Gastrocnemius medialis (tissue), 4 donors: ENCODE measurements at regions of chr2 and their contacts with region 1.

Region 1: DNA sequence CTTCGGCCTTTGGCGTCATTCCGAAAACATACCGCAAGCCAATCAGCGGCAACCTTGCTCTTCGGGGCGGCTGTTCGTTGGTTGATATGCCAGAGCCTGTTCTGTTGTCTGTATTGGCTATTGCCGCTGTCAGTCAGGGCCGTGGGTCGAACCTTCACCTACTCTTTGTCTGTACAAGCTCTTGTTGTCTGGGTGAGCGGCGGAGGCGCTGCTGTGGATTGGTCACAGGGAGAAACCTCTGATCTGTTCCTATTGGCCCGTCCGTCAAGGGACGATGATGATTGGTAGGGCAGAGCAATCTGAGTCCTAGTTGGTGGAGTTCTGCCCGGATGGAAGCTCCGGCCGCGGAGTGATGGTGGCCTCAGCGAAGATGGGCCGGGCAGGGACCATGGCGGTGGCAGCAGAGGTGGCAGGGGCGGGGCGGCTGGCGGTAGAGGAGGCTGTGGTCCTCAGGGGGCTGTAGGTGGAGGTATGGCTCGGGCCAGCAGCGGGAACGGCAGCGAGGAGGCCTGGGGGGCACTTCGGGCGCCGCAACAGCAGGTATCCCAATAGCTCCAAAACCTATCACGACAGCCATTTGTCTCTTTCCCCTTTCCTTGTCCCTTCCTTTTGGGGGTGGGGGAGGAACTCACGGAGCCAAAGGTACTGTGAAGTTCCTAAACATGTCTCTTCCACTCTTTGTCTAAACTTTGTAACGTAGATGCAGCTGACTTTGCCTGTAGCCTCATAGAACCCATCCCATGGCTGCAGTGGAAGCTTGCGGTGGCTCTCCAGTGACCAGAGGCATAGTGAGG is at the start of gene WBP1:
- DNase-seq: peak; percentile 100
- ATAC-seq: peak; percentile 92 to 93
- H3K4me3 ChIP-seq: peak within 1 kb of the TSS; percentile 67 to 92 (median 71)
- H3K27ac ChIP-seq: peak within 1 kb of the TSS; percentile 84 to 94 (median 88)
- H3K4me1 ChIP-seq: peaks cover 24 to 32% of the 10 kb centered on the region in 2 donors
- H3K27me3 ChIP-seq: no peaks in the 10 kb centered on the region
- CTCF ChIP-seq: no peak
- POLR2A ChIP-seq: peak; percentile 22 to 23
- total RNA-seq, gene WBP1: 10.7 to 17.5 (median 16.5) TPM

Region 2: DNA sequence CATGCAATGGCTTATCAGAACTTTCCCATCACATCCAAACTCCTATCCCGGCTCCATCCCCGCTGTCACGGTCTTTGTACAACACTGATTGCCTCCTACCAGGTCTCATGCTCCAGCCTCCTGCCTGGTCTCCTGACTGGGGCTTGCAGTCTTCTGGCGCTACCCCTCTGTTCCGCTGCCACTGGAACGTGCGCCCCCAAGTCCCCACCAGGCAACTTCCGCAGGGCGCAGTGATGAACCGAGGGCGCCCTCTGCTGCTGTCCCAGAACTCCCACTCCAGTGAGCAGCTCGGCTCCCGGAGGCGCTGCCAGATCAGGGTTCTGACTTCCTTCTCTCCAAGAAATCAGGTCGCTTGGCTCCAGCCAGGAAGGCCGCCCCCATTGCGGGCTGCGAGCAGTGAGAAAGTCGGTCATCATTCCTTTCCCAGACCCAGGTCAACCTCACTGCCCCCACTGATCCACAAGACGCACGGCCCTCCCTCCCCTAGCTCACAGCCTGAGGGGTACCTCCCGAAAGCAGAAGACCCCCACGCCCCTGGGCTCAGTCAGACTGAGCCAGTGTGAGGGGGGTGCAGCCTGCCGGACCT is 1301.7 kb before region 1 on chr2:
- in situ Hi-C with region 1: no loop called
- intact Hi-C with region 1: no loop called
- DNase-seq: peak; percentile 17 to 34
- ATAC-seq: peak; percentile 62 to 72
- H3K4me3 ChIP-seq: no peak overlapping the region
- H3K27ac ChIP-seq: no peak overlapping the region
- H3K4me1 ChIP-seq: peaks cover 0 to 3% of the 10 kb centered on the region in 2 donors
- H3K27me3 ChIP-seq: peaks cover 0 to 9% (median 5%) of the 10 kb centered on the region in 3 donors
- CTCF ChIP-seq: peak; percentile 43 to 82 (median 73)
- POLR2A ChIP-seq: no peak

Region 3: DNA sequence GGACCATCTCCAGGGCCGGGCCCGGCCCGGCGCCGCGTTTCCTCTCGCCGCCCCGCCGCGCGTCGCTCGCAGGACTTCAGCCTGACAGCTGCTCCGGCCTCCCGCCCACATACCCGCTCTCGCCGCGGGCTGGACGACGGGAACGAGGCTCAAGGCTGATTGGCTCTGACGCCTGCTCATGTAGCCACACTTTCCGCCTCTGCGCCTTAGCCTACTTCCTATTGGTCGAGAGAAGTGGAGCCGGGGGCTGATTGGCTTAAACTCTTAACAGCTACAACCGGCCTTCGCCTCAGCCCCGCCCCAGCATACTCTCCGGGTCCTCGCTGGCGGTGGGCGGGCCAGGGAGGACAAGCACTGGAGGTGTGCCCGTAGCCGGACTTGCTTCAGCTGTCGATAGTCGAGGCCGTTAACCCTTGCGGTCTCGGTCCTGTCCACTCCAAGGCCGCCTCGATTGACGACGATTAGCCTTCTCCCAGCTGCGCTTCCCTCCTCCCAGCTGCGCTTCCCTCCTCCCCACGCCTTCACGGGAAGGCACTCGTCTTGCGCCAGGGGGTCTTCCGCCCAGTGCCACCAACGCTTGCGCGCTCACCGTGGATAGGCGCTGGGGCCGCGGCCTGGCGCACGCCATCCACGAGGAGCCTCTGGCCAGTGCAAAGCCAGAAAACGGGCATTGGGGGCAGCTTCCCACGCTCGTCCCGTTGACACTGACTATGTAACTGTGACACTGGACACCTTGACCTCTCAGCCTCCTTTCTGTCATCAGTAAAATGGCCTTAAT is 1225.0 kb before region 1 on chr2 and contains the start of gene PRADC1:
- in situ Hi-C with region 1: no loop called
- intact Hi-C with region 1: loop called (anchors 10 kb)
- DNase-seq: peak; percentile 100
- ATAC-seq: peak; percentile 90 to 93
- H3K4me3 ChIP-seq: peak within 1 kb of the TSS; percentile 67 to 100 (median 95)
- H3K27ac ChIP-seq: peak within 1 kb of the TSS; percentile 90 to 100 (median 95)
- H3K4me1 ChIP-seq: peaks cover 17 to 35% of the 10 kb centered on the region in 2 donors
- H3K27me3 ChIP-seq: no peaks in the 10 kb centered on the region
- CTCF ChIP-seq: no peak
- POLR2A ChIP-seq: peak; percentile 85 to 87
- total RNA-seq, gene PRADC1: 69.4 to 132 (median 104) TPM

Region 4: DNA sequence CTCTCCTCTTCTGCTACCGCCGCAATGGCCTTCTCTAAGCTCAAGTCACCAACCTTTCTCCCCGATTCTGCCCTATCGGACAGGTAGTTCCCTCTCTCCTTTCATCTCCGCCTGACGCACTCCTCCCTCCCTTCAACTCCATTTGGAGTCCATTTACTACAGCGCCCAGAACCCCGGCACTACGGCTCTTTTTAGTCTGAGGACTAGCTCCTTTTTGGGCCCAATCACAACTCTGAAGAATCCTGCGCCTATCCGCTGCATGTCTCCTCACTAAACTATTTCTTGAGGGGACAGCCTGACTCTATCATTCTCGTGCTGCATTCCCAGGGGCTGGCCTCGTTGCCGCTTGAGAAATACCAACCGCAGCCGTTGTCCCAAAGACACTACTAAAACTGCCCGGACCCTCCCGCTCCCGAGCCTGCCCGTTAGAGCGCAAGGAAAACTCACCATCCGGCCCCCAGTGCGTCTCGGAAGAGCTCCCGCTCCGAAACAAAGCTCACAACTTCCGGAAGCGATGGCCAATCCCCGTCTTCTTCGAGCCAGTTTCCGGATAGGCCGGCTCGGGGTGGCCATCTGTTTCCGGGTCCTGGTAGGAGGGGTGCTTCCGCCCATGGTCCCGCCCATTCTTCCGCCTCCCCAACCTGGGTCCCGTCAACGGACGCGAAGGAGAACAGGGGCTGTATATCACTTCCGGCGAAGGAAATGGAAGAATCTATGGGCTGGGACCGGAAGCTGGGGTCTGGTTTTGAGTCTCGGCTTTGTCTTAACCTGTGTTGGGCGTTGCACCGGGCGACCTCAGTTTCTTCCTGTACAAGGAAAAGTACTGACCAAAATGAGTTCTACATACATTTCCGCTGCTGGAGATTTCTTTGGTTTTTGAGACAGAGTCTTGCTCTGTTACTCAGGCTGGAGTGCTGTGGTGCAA is 721.2 kb before region 1 on chr2 and contains the start of gene TPRKB:
- in situ Hi-C with region 1: no loop called
- intact Hi-C with region 1: loop called (anchors 2 kb)
- DNase-seq: peak; percentile 96 to 97
- ATAC-seq: peak; percentile 99
- H3K4me3 ChIP-seq: peak within 1 kb of the TSS; percentile 74 to 89 (median 82)
- H3K27ac ChIP-seq: peak within 1 kb of the TSS; percentile 69 to 86 (median 78)
- H3K4me1 ChIP-seq: peaks cover 19 to 20% of the 10 kb centered on the region in 2 donors
- H3K27me3 ChIP-seq: no peaks in the 10 kb centered on the region
- CTCF ChIP-seq: no peak
- POLR2A ChIP-seq: peak; percentile 58 to 65
- total RNA-seq, gene TPRKB: 49.4 to 90.1 (median 55.9) TPM

Region 5: DNA sequence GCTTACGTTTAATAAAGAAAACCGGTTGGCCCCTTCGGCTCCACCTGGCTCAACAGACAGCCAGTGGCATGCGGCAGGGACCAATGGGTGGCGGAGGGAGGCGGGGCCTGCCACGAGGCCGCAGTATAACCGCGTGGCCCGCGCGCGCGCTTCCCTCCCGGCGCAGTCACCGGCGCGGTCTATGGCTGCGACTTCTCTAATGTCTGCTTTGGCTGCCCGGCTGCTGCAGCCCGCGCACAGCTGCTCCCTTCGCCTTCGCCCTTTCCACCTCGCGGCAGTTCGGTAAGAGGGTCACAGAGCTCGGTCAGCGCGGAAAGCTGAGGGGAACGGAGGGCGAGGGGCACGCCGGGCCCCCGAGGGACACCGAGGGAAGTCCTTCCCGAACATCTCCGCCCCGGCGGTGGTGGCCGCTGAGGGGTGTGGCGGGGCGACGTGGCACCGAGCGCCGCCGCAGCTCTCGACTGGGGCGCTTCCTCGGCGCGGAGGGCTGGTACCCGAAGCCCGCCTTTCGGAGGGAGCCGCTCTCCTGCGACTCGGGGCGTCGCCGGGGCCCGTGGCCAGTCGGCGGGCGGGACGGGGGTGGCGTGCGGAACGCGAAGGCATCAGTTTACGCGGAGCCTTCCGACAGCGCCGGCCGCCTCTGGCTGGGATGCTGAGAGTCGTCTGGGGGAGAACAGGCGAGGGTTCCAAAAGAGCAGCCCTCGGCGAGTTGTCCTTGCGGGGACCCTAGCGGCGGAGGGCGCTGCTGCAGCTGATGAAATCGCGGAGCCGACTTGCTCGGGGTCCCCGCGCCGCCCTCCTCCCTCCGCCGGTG is 259.7 kb before region 1 on chr2 and contains the start of gene MTHFD2:
- in situ Hi-C with region 1: no loop called
- intact Hi-C with region 1: loop called (anchors 10 kb)
- DNase-seq: peak; percentile 83 to 87
- ATAC-seq: peak; percentile 69 to 72
- H3K4me3 ChIP-seq: peak within 1 kb of the TSS; percentile 61 to 80 (median 78)
- H3K27ac ChIP-seq: peak within 1 kb of the TSS; percentile 77 to 93 (median 88)
- H3K4me1 ChIP-seq: peaks cover 33 to 39% of the 10 kb centered on the region in 2 donors
- H3K27me3 ChIP-seq: no peaks in the 10 kb centered on the region
- CTCF ChIP-seq: peak; percentile 74 to 89 (median 76)
- POLR2A ChIP-seq: peak; percentile 68 to 82
- total RNA-seq, gene MTHFD2: 29.0 to 53.5 (median 32.5) TPM

Region 6: DNA sequence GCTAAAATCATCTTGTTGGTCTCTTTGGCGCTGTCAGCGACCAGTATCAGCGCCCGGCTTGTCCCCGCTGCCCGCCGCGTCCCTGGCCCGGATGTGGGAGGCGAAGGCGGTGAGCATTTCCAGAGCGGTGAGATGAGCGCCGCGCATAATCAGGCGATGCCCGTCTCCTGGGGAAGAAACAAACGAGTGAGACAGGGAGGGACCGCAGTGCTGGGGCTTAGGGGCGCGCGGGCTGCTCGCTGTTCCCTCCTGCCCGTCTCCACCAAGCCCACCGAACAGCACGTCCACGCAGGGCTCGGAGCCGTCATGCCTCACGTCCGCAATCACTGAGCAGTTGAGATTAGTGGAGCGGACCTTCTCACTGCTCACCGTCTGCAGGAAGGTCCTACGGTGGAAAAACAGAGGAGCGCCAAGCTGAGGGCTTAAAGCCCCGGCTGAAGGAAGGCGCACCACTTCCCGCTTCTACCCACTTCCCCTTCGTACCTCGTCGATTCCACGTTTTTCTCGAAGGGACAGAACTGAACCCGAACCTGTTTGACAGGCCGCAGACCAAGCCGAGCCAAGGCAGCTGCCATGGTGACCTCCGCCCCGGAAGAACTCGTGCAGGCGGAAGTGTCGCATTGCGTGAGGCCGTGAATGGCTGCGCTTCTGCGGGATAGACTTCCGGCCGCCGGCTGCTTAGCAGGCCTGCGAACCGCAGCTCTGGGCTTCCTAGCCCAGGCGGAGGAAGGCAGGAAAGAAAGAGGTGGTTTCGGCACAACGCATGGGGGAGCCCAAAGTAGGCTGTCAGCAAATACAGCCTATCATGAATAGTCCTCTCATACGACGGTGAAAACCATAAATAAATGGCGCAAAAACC is 14.0 kb after region 1 on chr2 and contains the start of gene MRPL53:
- in situ Hi-C with region 1: no loop called
- intact Hi-C with region 1: loop called (anchors 1 kb)
- DNase-seq: peak; percentile 86 to 90
- ATAC-seq: peak; percentile 95 to 96
- H3K4me3 ChIP-seq: peak within 1 kb of the TSS; percentile 67 to 88 (median 79)
- H3K27ac ChIP-seq: peak within 1 kb of the TSS; percentile 79 to 90 (median 87)
- H3K4me1 ChIP-seq: peaks cover 20 to 25% of the 10 kb centered on the region in 2 donors
- H3K27me3 ChIP-seq: no peaks in the 10 kb centered on the region
- CTCF ChIP-seq: no peak
- POLR2A ChIP-seq: peak; percentile 48 to 68
- total RNA-seq, gene MRPL53: 26.5 to 48.7 (median 41.5) TPM

Region 7: DNA sequence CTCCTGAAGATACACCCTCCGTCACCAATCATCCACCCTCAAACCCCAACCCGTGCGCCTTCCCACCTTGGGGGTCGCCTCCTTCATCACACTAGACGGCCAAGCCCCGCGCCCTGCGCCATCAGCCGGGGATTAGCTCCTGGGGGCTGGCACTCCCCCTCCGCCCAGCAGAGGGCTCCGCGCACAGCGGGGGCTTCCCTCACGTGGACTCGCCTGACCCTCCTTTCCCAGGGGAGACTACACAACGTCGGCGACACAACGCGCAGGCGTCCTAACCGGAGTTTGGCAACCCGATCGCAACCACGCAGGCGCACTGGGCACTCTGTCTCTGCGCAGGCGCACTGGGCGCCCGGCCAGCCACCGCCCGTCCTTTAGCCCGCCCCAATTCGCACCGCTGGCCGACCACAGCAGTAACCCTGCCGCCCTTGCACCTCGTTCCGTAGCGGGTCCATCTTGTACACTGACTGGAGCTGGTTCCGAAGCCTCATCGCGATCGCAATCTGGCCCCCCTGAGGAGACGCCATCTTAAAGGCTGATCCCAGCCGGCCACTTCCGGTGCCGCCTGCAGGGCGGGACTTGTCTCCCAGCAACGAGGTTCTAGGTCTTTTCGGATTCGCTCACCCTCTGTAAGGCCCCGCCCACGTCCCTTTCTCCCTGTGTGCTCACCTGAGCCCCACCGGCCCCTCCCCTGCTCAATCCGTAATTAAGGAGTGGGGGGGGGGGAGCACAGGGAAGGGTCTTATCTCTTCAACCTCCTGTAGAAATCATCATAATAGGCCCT is 49.0 kb after region 1 on chr2 and contains the start of gene PCGF1:
- in situ Hi-C with region 1: no loop called
- intact Hi-C with region 1: loop called (anchors 1 kb)
- DNase-seq: peak; percentile 98 to 99
- ATAC-seq: peak; percentile 98 to 99
- H3K4me3 ChIP-seq: peak within 1 kb of the TSS; percentile 75 to 99 (median 84)
- H3K27ac ChIP-seq: peak within 1 kb of the TSS; percentile 92 to 100 (median 98)
- H3K4me1 ChIP-seq: peaks cover 25 to 41% of the 10 kb centered on the region in 2 donors
- H3K27me3 ChIP-seq: peaks cover 26 to 53% (median 38%) of the 10 kb centered on the region in 3 donors
- CTCF ChIP-seq: peak in 4 of 5 experiments; percentile 18 to 29 (median 24)
- POLR2A ChIP-seq: no peak
- total RNA-seq, gene PCGF1: 14.2 to 23.6 (median 20.0) TPM

Region 8: DNA sequence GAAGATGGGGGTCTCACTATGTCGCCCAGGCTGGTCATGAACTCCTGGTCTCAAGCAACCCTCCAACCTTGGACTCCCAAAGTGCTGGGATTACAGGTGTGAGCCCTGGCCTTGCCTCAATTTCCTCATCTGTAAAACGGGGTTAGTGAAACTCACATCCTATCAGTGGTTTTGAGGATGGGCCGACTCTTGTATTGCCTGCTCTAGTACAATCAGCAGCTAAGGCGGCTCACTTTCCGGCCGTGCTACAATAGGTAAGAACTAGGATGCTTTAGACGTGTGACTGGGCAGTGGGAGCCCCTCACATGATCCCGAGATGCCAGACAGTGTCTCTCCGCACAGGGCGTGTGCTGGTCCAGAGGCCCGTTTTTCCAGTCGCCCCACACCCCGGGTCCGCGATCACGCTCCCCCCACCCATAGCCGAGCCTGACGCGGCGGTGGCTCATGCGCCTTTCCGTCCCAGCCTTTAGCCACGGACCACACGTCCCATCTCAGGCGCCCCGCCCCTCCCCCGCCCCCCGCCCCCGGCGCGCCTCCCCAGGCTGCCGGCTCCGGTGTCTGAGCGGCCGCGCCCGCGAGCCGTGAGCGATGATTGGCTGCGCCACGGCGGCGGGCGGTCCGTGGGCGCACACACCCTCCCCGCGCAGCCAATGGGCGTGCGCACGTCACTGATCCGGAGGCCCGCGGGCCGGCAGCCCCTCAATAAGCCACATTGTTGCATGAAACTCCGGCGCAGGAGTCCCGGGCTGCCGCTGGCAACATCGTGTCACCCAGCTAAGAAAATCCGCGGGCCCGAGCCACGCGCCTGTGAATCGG is 375.3 kb after region 1 on chr2 and contains the start of gene HK2:
- in situ Hi-C with region 1: loop called in 1 of 4 experiments (anchors 25 kb)
- intact Hi-C with region 1: loop called (anchors 10 kb)
- DNase-seq: peak; percentile 78 to 79
- ATAC-seq: peak; percentile 73 to 74
- H3K4me3 ChIP-seq: peak within 1 kb of the TSS; percentile 78 to 91 (median 88)
- H3K27ac ChIP-seq: peak within 1 kb of the TSS; percentile 84 to 97 (median 90)
- H3K4me1 ChIP-seq: peaks cover 16 to 21% of the 10 kb centered on the region in 2 donors
- H3K27me3 ChIP-seq: peaks cover 0 to 8% (median 0%) of the 10 kb centered on the region in 3 donors
- CTCF ChIP-seq: no peak
- POLR2A ChIP-seq: peak; percentile 89 to 96
- total RNA-seq, gene HK2: 18.1 to 57.6 (median 42.1) TPM